Right ventricle myocardium inferior (tissue), 1 donor: ENCODE measurements at regions of chr16 and their contacts with region 1.

Region 1: GRCh38 chr16:82738699-82739098 is 111.9 kb downstream of the CDH13 start:
- DNase-seq: no peak
- ATAC-seq: no peak

Region 2: GRCh38 chr16:82715833-82716232 is 22.9 kb before region 1 on chr16:
- intact Hi-C with region 1: loop called (anchors 1 kb)
- DNase-seq: peak; percentile 67
- ATAC-seq: peak; percentile 92